ENCODE measurements at regions of chr2 and their contacts with region 1.

Region 1: GRCh38 chr2:191280304-191280703 is 35.1 kb downstream of the MYO1B start:
- DNase-seq: no peak
- ATAC-seq: no peak
- H3K4me3 ChIP-seq: no peak overlapping the region
- H3K27ac ChIP-seq: no peak overlapping the region
- H3K4me1 ChIP-seq: peaks cover 7% of the 10 kb centered on the region
- H3K27me3 ChIP-seq: no peaks in the 10 kb centered on the region
- CTCF ChIP-seq: no peak
- POLR2A ChIP-seq: no peak
- RAD21 ChIP-seq: no peak

Region 2: GRCh38 chr2:192208848-192209247 is 928.5 kb after region 1 on chr2:
- CTCF ChIA-PET with region 1: interaction called, 10 read pairs
- POLR2A ChIA-PET with region 1: no interaction called
- dilution Hi-C with region 1: no loop called
- in situ Hi-C with region 1: no loop called
- intact Hi-C with region 1: no loop called
- DNase-seq: peak; percentile 33
- ATAC-seq: no peak
- H3K4me3 ChIP-seq: no peak overlapping the region
- H3K27ac ChIP-seq: no peak overlapping the region
- H3K4me1 ChIP-seq: no peaks in the 10 kb centered on the region
- H3K27me3 ChIP-seq: no peaks in the 10 kb centered on the region
- CTCF ChIP-seq: no peak
- POLR2A ChIP-seq: no peak
- RAD21 ChIP-seq: no peak

Measured in IMR-90 (cell line).